HepG2 (cell line): ENCODE measurements at regions of chr11 and their contacts with region 1.

Region 1: GRCh38 chr11:119101759-119102423 is at the start of gene DPAGT1:
- DNase-seq: peak; percentile 94
- ATAC-seq: peak; percentile 88
- H3K4me3 ChIP-seq: peak within 1 kb of the TSS; percentile 77 to 91 (median 86)
- H3K27ac ChIP-seq: peak within 1 kb of the TSS; percentile 97
- H3K4me1 ChIP-seq: peaks cover 36% of the 10 kb centered on the region
- H3K27me3 ChIP-seq: no peaks in the 10 kb centered on the region; a peak in 1 of 5 replicates
- CTCF ChIP-seq: no peak
- EP300 ChIP-seq: no peak
- POLR2A ChIP-seq: peak in 1 of 2 experiments; percentile 53; a peak in 3 of 4 replicates
- RAD21 ChIP-seq: no peak
- total RNA-seq, gene DPAGT1: 15.1 and 37.6 TPM in 2 replicates

Region 2: DNA sequence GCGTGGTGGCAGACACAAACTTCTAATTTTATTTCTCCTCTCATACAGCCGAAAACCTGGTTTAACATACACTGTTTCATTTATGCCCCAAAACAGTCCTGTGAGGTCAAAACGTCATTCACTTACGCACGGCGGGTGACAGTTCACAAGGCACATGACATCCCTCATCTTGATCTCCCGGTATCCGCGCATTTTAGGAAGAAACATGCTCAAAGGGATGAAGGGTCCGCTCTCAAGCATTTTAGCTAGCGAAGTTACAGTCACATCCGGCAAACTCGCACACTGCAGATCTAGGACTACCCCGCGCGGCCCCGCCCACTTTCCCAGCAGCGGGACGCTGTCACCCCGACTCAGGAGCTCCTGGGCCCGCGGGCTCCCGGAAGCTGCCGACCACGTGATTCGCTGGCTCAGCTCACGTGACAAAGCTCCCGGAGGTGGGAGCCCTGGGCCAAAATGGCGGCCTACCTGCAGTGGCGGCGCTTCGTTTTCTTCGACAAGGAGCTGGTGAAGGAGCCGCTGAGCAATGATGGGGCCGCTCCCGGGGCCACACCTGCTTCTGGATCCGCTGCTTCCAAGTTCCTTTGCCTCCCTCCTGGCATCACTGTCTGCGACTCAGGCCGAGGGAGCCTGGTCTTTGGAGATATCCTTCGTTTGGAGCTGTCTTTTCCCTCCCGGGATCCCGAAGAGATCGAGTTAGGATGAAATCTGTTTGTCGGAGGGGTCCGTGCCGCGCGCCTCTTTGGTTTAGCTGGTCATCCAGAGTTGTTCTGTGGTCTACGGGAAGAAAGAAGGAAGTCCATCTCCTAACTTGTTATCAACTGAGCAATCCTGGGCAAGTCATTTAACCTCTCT is 34.3 kb before region 1 on chr11 and contains the start of gene VPS11:
- CTCF ChIA-PET with region 1: no interaction called
- POLR2A ChIA-PET with region 1: interaction called, 22 read pairs
- in situ Hi-C with region 1: no loop called
- intact Hi-C with region 1: no loop called
- DNase-seq: peak; percentile 92
- ATAC-seq: peak; percentile 98
- H3K4me3 ChIP-seq: peak within 1 kb of the TSS; percentile 97 to 98 (median 97)
- H3K27ac ChIP-seq: peak within 1 kb of the TSS; percentile 83
- H3K4me1 ChIP-seq: peaks cover 25% of the 10 kb centered on the region
- H3K27me3 ChIP-seq: no peaks in the 10 kb centered on the region; a peak in 1 of 5 replicates
- CTCF ChIP-seq: peak; percentile 12; the same call in 1 of the 2 replicates
- EP300 ChIP-seq: peak in 1 of 2 experiments; percentile 20; a peak in 1 of 4 replicates
- POLR2A ChIP-seq: peak; percentile 70 to 82
- RAD21 ChIP-seq: no peak
- total RNA-seq, gene VPS11: 21.6 and 23.3 TPM in 2 replicates

Region 3: GRCh38 chr11:119084663-119085436 is 17.0 kb before region 1 on chr11 and contains the start of gene HMBS:
- CTCF ChIA-PET with region 1: no interaction called
- POLR2A ChIA-PET with region 1: interaction called, 47 read pairs
- in situ Hi-C with region 1: no loop called
- intact Hi-C with region 1: no loop called
- DNase-seq: peak; percentile 92
- ATAC-seq: peak; percentile 89
- H3K4me3 ChIP-seq: peak within 1 kb of the TSS; percentile 71 to 93 (median 77)
- H3K27ac ChIP-seq: peak within 1 kb of the TSS; percentile 98
- H3K4me1 ChIP-seq: peaks cover 30% of the 10 kb centered on the region
- H3K27me3 ChIP-seq: no peaks in the 10 kb centered on the region; a peak in 1 of 5 replicates
- CTCF ChIP-seq: no peak
- EP300 ChIP-seq: no peak
- POLR2A ChIP-seq: peak; percentile 83 to 93
- RAD21 ChIP-seq: peak; percentile 45; the same call in 1 of the 2 replicates
- total RNA-seq, gene HMBS: 9.4 and 14.0 TPM in 2 replicates

Region 4: GRCh38 chr11:119121008-119121810 is 19.3 kb after region 1 on chr11 and contains the start of gene HINFP:
- CTCF ChIA-PET with region 1: no interaction called
- POLR2A ChIA-PET with region 1: interaction called, 75 read pairs
- in situ Hi-C with region 1: no loop called
- intact Hi-C with region 1: loop called (anchors 2 kb)
- DNase-seq: peak; percentile 97
- ATAC-seq: peak; percentile 98
- H3K4me3 ChIP-seq: peak within 1 kb of the TSS; percentile 81 to 98 (median 84)
- H3K27ac ChIP-seq: peak within 1 kb of the TSS; percentile 55
- H3K4me1 ChIP-seq: peaks cover 36% of the 10 kb centered on the region
- H3K27me3 ChIP-seq: no peaks in the 10 kb centered on the region; a peak in 1 of 5 replicates
- CTCF ChIP-seq: no peak; the same call in 1 of the 2 replicates
- EP300 ChIP-seq: no peak
- POLR2A ChIP-seq: peak; percentile 65 to 84
- RAD21 ChIP-seq: 0 out of 2 replicates have a peak, but pooled peaks have one; percentile 20
- total RNA-seq, gene HINFP: 13.3 and 15.1 TPM in 2 replicates

Region 5: DNA sequence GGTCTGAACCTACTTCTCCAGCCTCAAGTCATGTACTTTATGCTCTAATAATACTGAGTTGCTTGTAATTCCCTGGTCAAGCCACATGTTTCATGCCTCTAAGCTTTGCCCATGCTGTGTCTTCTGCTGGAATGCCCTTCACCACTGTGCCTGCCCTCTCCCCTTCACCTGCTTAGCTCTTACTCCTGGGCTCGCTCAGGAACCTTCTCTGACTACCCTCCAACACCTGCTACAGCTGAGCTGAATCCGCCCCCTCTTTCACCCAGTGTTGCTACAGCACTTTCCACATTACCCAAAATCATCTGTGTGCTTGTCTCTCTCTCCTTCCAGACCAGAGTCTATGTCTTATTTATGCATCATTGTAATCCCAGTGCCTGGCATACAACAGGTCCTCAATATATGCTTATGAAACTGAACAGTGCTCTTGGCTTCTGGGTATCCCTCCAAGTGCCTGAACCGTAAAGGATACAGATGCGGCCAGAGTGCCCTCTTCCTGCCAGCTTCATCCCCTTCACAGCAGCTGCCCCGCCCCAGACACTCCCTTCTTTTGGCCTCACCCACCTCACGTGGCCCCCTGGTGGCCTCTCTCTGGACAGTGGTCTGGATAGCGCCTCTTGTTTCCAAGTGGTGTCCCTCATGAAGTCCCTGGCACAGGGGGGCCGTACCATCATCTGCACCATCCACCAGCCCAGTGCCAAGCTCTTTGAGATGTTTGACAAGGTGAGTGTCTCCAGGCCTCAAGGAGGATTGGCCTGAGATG is 54.0 kb after region 1 on chr11:
- CTCF ChIA-PET with region 1: no interaction called
- POLR2A ChIA-PET with region 1: no interaction called
- in situ Hi-C with region 1: no loop called
- intact Hi-C with region 1: loop called (anchors 2 kb)
- DNase-seq: peak; percentile 57
- ATAC-seq: peak; percentile 89
- H3K4me3 ChIP-seq: no peak overlapping the region
- H3K27ac ChIP-seq: no peak overlapping the region
- H3K4me1 ChIP-seq: 0 out of 2 replicates have a peak, but pooled peaks cover 4% of the 10 kb centered on the region
- H3K27me3 ChIP-seq: peaks cover 12 to 69% of the 10 kb centered on the region in 2 experiments
- CTCF ChIP-seq: peak; percentile 64
- EP300 ChIP-seq: no peak
- POLR2A ChIP-seq: no peak
- RAD21 ChIP-seq: no peak

Region 6: DNA sequence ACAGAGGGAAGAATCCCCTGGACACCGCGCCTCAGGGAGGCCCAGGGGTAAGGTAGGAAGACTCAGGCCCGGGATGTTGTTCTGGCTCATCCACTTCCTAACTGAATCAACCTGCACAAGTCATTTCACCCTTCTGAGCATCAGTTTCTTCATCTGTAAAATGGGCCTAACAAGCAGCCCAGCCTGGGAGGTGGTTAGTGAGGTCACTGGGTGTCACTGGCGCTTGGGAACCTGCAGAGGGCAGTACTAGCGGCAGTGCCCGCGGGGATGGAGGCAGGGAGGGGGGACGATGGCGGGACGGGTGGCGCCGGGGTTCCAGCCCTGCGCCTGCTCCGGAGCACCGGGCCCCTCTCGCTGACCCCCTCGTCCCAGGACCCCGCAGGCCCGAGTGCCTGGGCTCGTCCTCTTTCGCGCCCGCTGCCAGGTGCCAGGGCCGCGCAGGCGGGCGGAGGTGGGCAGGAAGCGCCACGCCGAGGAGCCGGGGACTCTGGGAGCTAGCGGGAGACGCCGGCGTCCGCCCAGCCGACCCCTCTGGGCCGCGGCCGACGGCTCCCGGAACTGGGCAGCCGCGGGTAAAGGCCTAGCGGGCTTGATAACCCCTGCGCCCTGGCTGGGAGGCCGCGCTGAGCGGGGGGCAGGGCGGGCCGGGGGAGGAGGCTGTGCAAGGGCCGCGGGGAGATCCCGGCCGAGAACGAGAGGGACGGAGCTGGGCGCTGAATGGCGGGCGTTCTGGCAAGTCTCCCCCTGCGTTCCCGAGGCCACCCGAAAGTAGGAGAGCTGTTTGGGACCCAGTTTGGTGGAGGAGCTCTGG is 66.8 kb after region 1 on chr11 and contains the start of gene NLRX1:
- CTCF ChIA-PET with region 1: no interaction called
- POLR2A ChIA-PET with region 1: interaction called, 14 read pairs
- in situ Hi-C with region 1: no loop called
- intact Hi-C with region 1: no loop called
- DNase-seq: peak; percentile 80
- ATAC-seq: peak; percentile 87
- H3K4me3 ChIP-seq: peak within 1 kb of the TSS; percentile 65 to 94 (median 78)
- H3K27ac ChIP-seq: peak within 1 kb of the TSS; percentile 86
- H3K4me1 ChIP-seq: peaks cover 39% of the 10 kb centered on the region
- H3K27me3 ChIP-seq: peaks cover 0 to 5% of the 10 kb centered on the region in 2 experiments; a peak in 1 of 5 replicates
- CTCF ChIP-seq: peak; percentile 91
- EP300 ChIP-seq: no peak; a peak in 1 of 4 replicates
- POLR2A ChIP-seq: peak; percentile 78 to 82
- RAD21 ChIP-seq: peak; percentile 59
- total RNA-seq, gene NLRX1: 6.8 and 11.0 TPM in 2 replicates

Region 7: GRCh38 chr11:119196833-119197483 is 95.1 kb after region 1 on chr11:
- CTCF ChIA-PET with region 1: no interaction called
- POLR2A ChIA-PET with region 1: no interaction called
- in situ Hi-C with region 1: no loop called
- intact Hi-C with region 1: loop called (anchors 5 kb)
- DNase-seq: peak; percentile 83
- ATAC-seq: peak; percentile 82
- H3K4me3 ChIP-seq: no peak overlapping the region
- H3K27ac ChIP-seq: no peak overlapping the region
- H3K4me1 ChIP-seq: peaks cover 34% of the 10 kb centered on the region
- H3K27me3 ChIP-seq: peaks cover 3 to 8% of the 10 kb centered on the region in 2 experiments; a peak in 2 of 5 replicates
- CTCF ChIP-seq: peak; percentile 86
- EP300 ChIP-seq: no peak
- POLR2A ChIP-seq: no peak
- RAD21 ChIP-seq: peak; percentile 78